ENCODE measurements at regions of chr9 and their contacts with region 1.

Region 1: DNA sequence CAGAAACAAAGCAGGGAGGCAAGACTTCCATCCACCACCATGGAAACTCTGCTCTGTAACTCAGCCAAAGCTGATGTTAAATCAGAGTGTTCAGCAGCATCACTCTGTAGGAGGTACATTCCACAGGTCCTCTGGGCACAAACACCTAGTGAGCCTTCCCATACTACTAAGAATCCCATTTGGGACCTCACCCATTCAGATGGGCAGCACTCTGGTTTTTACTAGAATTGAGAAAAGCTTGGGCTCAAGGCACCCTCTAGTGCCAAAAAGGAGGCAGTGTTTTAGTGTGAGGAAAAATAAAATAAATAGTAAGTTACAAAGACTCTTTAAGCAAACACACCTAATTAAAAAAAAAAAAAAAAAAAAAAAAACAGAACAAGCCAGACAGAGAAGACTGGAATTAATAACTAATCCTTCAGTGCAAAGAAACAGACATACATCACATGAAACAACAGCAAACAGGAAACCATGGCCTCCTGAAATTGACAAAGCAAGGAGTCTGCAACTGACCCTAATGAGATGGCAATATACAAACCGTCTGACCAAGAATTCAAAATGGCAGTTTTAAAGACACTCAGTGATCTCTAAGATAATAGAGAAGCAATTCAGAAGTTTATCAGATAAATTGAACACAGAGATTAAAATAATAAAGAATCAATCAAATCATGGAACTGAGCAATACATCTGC is 159.5 kb downstream of the GNA14 start:
- DNase-seq: no peak
- H3K4me3 Mint-ChIP-seq: peak overlapping the region; percentile 82
- H3K27ac Mint-ChIP-seq: no peak overlapping the region
- H3K4me1 Mint-ChIP-seq: peaks cover 29% of the 10 kb centered on the region
- H3K27me3 Mint-ChIP-seq: peaks cover 1% of the 10 kb centered on the region

Region 2: DNA sequence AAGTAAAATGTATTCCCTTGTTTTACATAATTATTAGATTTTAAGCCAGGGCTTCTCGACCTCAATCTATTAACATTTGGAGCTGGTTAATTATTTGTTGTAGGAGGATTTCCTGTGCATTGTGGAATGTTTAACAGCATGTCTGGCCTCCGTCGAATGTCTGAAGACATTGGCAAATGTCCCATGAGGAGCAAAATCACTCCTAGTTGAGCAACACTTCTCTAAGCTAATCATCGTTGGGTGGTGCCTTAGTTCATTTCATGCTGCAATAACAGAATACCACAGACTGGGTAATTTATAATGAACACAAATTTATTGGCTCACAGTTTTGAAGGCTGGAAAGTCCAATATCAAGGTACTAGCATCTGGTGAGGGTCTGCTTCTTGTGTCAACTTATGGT is 324.7 kb before region 1 on chr9:
- intact Hi-C with region 1: loop called (anchors 1 kb)
- DNase-seq: no peak
- H3K4me3 Mint-ChIP-seq: no peak overlapping the region
- H3K27ac Mint-ChIP-seq: no peak overlapping the region
- H3K4me1 Mint-ChIP-seq: no peaks in the 10 kb centered on the region
- H3K27me3 Mint-ChIP-seq: peaks cover 9% of the 10 kb centered on the region

Region 3: GRCh38 chr9:77236693-77237092 is 251.9 kb before region 1 on chr9:
- intact Hi-C with region 1: no loop called
- DNase-seq: no peak
- H3K4me3 Mint-ChIP-seq: no peak overlapping the region
- H3K27ac Mint-ChIP-seq: no peak overlapping the region
- H3K4me1 Mint-ChIP-seq: no peaks in the 10 kb centered on the region
- H3K27me3 Mint-ChIP-seq: no peaks in the 10 kb centered on the region

Region 4: GRCh38 chr9:77433675-77434445 is 54.7 kb before region 1 on chr9:
- intact Hi-C with region 1: loop called (anchors 1 kb)
- DNase-seq: peak; percentile 15
- H3K4me3 Mint-ChIP-seq: no peak overlapping the region
- H3K27ac Mint-ChIP-seq: no peak overlapping the region
- H3K4me1 Mint-ChIP-seq: peaks cover 5% of the 10 kb centered on the region
- H3K27me3 Mint-ChIP-seq: peaks cover 3% of the 10 kb centered on the region

Region 5: DNA sequence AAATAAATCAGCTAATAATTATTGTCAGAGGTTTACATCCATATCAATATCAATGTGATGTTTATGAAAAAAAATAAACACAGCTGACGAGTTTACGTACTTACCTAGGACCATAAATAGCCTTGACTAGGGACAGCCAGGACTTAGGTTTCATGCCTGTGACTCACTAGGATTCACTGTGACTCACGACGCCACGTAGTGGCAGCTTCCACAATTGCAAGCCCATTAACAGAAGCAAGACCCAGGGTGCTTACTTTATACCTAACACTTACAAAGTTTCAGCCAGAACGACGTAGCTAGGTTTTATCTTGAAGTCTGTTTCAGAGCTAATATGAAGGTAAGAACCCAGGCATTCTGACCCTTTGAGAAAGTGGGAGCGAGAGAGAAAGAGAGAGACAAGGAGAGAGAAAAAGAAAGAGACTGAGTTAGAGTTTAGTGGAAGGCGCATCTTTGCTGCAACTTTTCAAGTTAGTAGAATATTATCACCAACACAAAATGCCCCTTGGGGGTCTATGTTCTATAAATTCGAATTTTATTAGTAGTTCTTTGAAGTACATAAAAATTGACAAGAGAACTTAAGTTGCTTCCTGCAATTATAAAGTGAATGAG is 31.6 kb before region 1 on chr9:
- intact Hi-C with region 1: loop called (anchors 1 kb)
- DNase-seq: peak; percentile 71
- H3K4me3 Mint-ChIP-seq: no peak overlapping the region
- H3K27ac Mint-ChIP-seq: no peak overlapping the region
- H3K4me1 Mint-ChIP-seq: peaks cover 25% of the 10 kb centered on the region
- H3K27me3 Mint-ChIP-seq: peaks cover 4% of the 10 kb centered on the region